Right ventricle myocardium inferior (tissue), 1 donor: ENCODE measurements at regions of chr5 and their contacts with region 1.

Region 1: GRCh38 chr5:96702503-96703383 is 40.6 kb downstream of the CAST start:
- DNase-seq: peak; percentile 96
- ATAC-seq: peak; percentile 98

Region 2: DNA sequence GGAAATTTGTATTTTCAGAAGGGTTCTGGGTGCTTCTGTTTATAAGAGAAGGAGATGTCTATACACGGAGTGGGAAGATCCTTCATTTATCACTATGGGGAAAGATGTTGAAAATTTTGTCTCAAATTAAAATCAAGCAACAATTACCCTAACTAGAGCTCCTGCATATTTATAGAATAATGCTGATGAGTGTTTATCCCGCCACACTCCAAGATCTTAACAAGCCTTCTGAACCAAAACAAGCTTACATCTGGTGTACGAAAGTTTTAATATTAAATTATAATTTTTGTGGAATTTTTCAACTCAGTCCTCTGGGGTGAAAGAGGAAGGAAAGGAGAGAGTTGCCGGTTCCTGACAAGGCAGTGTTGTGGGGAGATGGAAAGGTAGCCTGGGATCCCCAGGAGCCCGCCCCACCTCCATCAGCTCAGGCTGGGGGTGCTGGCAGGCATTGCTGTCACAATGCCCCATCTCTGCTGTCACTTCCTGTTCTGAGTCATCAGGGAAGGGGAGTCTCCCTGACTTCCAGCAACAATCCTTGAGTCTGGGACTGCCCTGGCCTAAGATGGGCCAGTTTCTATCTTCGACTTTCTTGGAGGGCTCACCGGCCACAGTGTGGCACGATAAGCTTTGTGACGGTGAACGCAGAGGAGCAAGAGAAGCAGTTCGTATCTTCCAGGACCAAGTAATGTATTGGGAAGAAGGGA is 40.5 kb after region 1 on chr5:
- intact Hi-C with region 1: loop called (anchors 2 kb)
- DNase-seq: no peak
- ATAC-seq: no peak

Region 3: DNA sequence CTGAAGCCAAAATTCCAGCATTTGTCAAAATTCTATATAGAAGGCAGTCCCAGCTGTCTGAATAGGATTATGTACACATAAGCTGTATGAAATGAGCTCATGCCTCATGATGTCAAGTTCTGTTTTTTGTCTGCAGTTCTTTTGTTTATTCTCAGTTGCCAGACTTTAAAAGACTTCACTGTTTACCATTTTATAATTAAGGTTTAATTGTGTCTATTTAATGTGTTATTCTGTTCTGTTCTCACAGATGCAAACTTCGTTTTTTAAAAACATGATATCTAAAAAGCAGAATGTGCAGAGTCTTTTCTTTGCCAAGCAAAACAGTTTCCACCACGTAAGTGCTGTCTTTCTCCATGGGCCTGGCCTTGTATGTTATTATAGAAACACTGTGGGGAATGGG is 73.9 kb after region 1 on chr5:
- intact Hi-C with region 1: no loop called
- DNase-seq: no peak
- ATAC-seq: no peak